ENCODE measurements at regions of chr11 and their contacts with region 1.

Region 1: DNA sequence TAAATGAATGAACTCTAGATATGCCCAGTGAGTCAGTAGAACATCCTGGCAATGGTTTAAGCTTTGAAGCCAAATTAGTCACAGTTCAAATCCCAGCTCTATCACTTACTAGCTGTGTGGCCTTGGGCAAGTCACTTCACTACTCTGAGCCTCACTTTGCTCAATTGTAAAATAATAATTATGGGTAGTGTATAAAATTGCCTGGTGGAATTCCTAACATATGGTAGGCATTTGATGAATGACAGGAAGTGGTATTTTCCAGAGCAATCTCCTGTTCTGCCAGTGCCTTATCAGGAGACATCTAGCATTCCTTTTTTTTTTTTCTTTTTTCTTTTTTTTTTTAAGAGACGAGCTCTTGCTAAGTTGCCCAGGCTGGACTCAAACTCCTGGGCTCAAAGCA is 13.0 kb downstream of the SCN4B start:
- DNase-seq: no peak
- H3K4me3 ChIP-seq: no peak overlapping the region
- H3K27ac ChIP-seq: no peak overlapping the region
- H3K27me3 ChIP-seq: peaks cover 14% of the 10 kb centered on the region
- CTCF ChIP-seq: no peak

Region 2: DNA sequence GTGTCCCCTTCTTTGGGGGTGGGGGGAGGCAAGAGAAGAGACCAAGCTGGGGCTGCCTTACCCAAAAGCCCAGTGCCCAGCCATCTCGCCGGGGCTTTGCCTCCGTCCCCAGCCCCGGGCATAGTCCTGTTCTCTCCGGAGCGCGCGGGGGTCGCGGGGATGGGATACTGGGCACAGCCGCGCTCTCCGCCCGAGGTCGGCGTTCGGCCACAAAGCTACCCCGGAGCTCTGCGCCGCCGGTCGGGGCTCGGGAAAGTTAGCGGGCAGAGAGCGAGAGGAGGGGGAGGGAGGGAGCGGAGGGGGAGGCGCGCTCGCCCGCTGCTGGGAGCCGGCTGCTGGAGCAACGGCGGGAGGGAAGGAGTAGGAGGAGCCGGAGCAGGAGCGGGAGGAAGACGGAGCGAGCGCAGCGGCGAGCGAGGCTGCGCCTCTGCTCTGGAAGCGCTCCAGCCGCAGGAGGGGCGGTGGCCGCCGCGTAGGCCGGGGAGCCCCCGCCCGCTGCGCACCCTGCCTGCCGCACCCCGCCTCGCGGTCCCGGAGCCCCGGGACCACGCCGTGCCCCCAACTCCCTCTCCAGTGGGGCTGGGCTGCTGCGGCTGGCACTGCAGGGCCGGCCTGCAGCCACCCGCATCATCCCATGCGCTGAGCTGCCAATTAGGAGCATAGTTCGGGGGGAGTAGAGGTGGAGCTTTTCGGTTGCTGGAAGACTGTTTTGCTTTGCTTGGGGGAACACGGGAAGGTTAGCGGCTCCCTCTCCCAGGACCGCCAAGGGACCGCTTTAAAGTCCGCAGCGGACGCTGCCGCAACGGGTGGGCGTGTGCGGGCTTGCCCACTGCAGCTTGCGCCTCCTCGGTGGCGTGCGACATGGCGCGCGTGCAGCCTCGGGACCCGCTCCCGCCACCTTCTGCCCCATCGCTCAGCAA is 13.2 kb after region 1 on chr11 and contains the start of gene SCN4B:
- CTCF ChIA-PET with region 1: interaction called, 15 read pairs
- POLR2A ChIA-PET with region 1: no interaction called
- DNase-seq: peak; percentile 6
- H3K4me3 ChIP-seq: peak within 1 kb of the TSS; percentile 46
- H3K27ac ChIP-seq: no peak within 1 kb of the TSS
- H3K27me3 ChIP-seq: peaks cover 80% of the 10 kb centered on the region
- CTCF ChIP-seq: no peak
- polyA plus RNA-seq, gene SCN4B: 0.10 and 0.11 TPM in 2 replicates

Region 3: DNA sequence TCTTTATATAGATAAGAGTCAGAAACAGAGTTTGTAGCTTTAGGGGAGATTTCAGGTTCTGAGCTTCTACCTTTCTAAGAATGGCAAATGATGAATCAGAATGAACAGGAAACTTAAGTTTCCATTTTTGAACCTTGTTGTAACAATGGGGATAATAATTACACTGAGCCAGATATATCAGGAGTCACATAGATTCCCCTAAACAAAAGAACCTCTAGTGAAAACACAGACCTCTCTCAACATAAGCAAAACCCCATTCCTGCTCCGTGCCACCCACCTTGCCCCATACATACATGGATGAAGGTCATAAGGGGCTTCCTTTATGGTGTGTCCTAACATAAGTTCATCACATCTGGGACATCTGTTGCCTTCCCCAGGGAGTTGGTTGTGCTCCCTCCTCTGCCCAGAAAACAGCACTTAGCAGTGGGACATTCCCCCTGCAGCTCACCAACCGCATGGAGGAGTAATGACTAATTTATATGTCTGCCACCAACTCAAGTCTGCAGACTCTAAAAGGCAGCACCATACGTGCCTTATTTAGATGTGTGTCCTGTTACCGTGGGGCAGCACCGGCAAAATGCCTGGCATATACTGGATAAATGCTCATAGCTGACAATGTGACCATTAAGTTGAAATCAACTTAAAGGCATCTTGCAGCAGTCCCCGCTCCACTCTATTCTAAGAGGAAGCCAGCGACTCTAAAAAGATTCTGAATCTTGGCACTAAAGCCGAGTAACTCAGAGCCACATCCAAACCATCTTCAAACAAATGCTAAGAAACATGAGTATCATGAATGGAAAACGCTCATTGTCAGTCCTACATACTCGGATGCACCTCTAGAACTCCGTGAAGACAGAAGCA is 77.3 kb after region 1 on chr11:
- CTCF ChIA-PET with region 1: no interaction called
- POLR2A ChIA-PET with region 1: no interaction called
- DNase-seq: no peak
- H3K4me3 ChIP-seq: no peak overlapping the region
- H3K27ac ChIP-seq: no peak overlapping the region
- H3K27me3 ChIP-seq: peaks cover 8% of the 10 kb centered on the region
- CTCF ChIP-seq: no peak

Region 4: DNA sequence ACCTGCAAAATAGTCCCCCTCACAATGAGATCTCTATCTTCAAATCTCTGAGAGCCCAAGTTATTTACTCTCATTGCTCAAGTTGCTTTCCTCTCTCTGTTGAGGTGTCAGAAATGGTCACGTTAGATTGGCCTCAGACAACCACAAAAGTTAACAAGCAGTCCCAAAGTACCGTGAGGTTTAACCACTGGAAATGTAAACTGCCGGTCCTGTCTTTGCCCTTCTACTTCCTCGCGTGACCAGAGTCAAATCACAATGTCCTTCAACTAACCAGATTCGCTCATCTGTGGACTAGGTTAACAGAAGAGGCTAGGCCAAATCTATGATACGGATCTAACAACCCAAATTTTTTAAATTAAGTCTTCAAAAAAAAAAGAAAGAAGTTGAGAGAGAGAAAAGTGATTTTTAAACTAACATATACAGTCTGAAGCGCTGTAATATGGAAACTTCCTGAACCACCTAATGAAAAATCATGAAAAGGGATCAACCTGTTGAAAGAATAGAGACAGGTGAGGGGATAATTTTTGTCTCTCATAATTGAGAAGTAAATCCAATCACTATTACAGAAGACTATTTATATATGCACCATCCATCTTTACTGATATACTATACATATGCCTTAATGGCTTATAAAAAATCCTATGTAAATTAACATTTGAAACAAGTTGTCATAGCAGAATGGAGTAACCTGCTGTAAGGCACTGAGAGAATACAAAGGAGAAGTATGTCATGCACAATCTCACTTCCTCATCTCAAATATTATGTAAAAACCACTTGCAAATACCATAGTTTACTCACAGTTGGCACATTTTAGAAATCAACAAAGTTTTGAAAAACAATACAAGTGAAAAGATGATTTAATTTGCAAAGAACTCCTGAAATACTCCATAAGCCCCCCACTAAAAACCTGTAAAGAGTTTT is 88.5 kb after region 1 on chr11:
- CTCF ChIA-PET with region 1: no interaction called
- POLR2A ChIA-PET with region 1: no interaction called
- DNase-seq: no peak
- H3K4me3 ChIP-seq: no peak overlapping the region
- H3K27ac ChIP-seq: no peak overlapping the region
- H3K27me3 ChIP-seq: peaks cover 3% of the 10 kb centered on the region
- CTCF ChIP-seq: no peak

Measured in AG04450 (cell line).